ENCODE measurements at regions of chr17 and their contacts with region 1.

Region 1: DNA sequence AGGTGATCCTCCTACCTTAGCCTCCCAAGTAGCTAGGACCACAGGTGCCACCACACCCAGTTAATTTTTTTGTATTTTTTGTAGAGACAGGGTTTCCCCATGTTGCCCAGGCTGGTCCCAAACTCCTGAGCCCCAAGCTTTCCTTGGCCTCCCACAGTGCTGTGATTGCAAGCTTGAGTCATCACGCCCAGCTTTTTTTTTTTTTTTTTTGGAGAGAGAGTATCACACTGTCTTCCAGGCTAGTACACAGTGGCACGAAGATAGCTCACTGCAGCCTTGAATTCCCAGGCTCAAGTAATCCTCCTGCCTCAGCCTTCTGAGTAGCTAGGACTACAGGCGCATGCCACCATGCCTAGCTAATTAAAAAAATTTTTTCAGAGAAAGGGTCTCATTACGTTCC is 27.2 kb downstream of the HEATR9 start:
- DNase-seq: no peak
- H3K4me3 ChIP-seq: no peak overlapping the region
- H3K27me3 ChIP-seq: no peaks in the 10 kb centered on the region
- CTCF ChIP-seq: no peak

Region 2: GRCh38 chr17:35752945-35753764 is 88.3 kb before region 1 on chr17 and contains the start of gene GAS2L2:
- CTCF ChIA-PET with region 1: no interaction called
- POLR2A ChIA-PET with region 1: no interaction called
- DNase-seq: no peak
- H3K4me3 ChIP-seq: no peak within 1 kb of the TSS
- H3K27me3 ChIP-seq: peaks cover 18% of the 10 kb centered on the region
- CTCF ChIP-seq: no peak
- polyA plus RNA-seq, gene GAS2L2: not detected in 2 replicates

Region 3: GRCh38 chr17:35819456-35819855 is 22.0 kb before region 1 on chr17:
- CTCF ChIA-PET with region 1: no interaction called
- POLR2A ChIA-PET with region 1: no interaction called
- DNase-seq: no peak
- H3K4me3 ChIP-seq: no peak overlapping the region
- H3K27me3 ChIP-seq: no peaks in the 10 kb centered on the region
- CTCF ChIP-seq: no peak

Region 4: GRCh38 chr17:35856603-35857002 is 15.1 kb after region 1 on chr17:
- CTCF ChIA-PET with region 1: no interaction called
- POLR2A ChIA-PET with region 1: no interaction called
- DNase-seq: no peak
- H3K4me3 ChIP-seq: no peak overlapping the region
- H3K27me3 ChIP-seq: no peaks in the 10 kb centered on the region
- CTCF ChIP-seq: no peak

Region 5: DNA sequence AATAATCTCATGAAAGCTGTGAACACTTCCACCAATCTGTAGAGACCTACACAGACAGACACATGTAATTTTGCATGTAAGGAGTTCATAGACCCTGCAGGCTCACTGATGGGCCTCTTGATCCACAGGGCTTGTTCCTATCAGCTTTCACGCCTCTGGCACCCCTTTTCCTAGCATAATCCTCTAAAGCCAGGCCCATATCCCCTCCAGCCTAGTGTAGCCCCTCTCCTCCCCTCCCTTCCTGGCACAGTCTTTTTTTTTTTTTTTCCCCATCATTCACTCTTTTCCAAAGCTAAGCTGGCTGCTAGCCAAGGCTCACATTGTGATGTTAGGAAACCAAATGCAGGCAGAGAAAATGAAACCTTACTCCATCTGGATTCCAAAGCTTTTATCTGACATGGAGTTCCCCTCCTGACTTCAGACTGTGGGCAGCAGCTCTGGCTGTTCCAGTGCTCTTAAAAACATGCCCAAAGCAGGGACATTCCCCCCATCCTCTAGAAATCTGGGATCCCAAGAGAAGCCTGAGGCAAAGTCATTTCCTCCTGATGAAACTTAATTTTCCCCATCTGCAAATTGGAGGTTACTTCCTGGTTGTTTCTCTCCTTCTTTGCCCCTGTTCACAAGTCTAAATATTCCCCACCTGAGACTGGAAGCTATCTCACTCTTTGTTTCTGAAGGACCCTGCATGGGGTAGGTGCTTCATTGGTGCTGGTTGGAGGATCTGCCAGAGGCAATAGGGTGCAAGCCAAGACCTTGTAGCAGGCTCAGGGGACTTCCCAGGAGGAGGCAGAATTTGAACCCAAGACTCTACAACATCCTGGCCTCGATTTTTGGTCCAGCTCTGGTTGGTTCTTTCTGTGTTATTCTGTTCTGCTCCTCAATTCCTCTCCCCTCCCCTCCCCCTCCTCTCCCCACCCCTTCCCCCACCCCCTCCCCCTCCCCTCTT is 48.6 kb after region 1 on chr17:
- CTCF ChIA-PET with region 1: no interaction called
- POLR2A ChIA-PET with region 1: interaction called, 32 read pairs
- DNase-seq: peak; percentile 9
- H3K4me3 ChIP-seq: no peak overlapping the region
- H3K27me3 ChIP-seq: no peaks in the 10 kb centered on the region
- CTCF ChIP-seq: no peak

Region 6: DNA sequence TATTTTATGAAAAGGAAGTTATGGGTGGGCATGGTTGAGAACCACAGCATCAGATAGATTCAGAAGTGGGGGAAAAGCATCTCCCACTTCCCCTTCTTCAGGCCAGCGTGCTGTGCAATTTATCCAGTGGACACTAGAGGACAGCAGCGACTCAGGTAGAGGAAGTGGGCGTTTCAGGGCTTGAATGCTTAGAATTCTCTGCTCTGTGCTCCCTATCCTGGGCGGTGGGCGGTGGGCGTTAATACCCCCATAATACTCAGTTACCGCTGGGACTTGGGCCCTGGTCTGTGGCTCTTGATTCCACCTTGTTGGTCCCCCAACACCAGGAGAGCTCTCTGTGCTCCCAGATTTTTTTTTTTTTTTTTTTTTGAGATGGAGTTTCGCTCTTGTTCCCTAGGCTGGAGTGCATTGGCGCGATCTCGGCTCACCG is 105.7 kb after region 1 on chr17:
- CTCF ChIA-PET with region 1: no interaction called
- POLR2A ChIA-PET with region 1: no interaction called
- DNase-seq: no peak
- H3K4me3 ChIP-seq: no peak overlapping the region
- H3K27me3 ChIP-seq: no peaks in the 10 kb centered on the region
- CTCF ChIP-seq: peak; percentile 87

Measured in BJ (cell line).